ENCODE measurements at regions of chr2 and their contacts with region 1.

Region 1: DNA sequence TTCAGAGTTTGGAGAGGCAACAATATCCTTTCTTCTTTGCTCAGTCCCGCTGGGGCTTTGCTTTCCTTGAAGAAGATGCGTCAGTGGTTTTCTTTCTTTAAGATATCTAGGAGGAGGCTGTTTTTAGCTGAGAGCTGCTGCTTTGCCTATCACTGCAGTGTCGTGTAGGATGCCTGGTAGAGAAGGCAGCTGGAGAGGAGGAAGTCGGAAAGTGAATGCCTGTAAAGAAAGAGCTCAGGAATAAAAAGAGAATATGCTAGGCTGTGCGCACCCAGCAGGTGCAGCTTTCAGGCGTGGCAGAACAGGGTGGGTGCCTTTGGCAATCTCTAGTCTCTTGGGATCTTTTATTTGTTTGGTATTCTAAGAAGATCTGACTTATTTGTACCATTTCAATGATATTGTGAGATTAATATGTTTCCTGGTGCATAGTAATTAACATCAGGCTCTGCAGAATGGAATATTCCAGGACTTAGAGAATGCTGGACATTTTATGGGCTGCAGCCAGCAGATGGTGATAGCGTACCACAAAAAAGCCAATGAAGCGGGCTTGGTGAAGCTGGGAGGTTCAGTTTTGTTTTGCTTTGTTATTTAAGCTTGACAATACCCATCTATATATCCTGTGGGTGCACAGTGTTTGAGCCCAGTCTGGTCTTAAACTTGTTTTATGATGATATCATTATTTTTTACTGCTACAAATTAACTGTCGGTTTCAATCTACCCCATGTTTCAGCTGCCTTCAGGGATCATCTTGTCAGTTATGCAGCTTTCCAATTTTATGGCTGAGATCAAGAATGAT is 34.9 kb downstream of the CAVIN2 start:
- DNase-seq: peak; percentile 9
- H3K4me3 ChIP-seq: no peak overlapping the region
- H3K27me3 ChIP-seq: no peaks in the 10 kb centered on the region
- CTCF ChIP-seq: peak; percentile 82

Region 2: DNA sequence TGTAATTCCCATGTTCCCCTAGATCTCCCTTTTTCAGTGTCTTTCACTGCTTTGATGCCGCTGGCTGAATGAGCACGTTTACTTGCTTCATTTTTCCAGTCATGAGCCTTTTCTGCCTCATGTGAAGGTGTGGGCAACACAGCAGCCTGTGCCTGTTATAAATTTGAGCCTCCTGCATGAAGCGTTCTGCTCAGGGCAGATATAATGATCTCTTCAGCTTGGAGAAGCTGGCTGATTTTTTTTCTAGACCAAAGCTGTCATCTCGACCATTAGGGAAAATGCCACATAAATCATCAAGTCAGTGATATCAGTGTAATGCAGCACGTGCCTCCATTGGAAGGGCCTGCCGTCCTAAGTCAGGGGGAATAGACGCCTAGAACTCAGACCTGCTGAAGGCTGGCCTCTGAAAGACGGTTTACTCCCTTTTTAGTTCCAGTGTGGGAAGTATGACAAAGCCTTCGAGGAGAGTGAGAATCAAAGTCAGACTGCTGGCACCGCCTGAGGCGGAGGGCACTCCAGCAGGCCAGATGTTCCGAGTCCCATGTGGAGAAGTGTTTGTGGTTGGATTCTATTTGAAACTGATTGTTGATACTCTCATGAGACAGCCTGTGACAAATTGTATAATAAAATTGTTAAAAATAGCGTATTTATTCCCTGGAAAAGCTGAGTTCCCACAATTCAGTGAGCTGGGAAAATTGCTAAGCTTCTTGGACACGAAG is 370.4 kb before region 1 on chr2:
- CTCF ChIA-PET with region 1: no interaction called
- POLR2A ChIA-PET with region 1: no interaction called
- DNase-seq: peak; percentile 93
- H3K4me3 ChIP-seq: no peak overlapping the region
- H3K27me3 ChIP-seq: 0 out of 2 replicates have a peak, but pooled peaks cover 2% of the 10 kb centered on the region
- CTCF ChIP-seq: no peak

Region 3: GRCh38 chr2:191555092-191555742 is 256.8 kb before region 1 on chr2:
- CTCF ChIA-PET with region 1: interaction called, 12 read pairs
- POLR2A ChIA-PET with region 1: no interaction called
- DNase-seq: no peak
- H3K4me3 ChIP-seq: no peak overlapping the region
- H3K27me3 ChIP-seq: no peaks in the 10 kb centered on the region; the same call in 1 of the 2 replicates
- CTCF ChIP-seq: peak; percentile 71

Region 4: DNA sequence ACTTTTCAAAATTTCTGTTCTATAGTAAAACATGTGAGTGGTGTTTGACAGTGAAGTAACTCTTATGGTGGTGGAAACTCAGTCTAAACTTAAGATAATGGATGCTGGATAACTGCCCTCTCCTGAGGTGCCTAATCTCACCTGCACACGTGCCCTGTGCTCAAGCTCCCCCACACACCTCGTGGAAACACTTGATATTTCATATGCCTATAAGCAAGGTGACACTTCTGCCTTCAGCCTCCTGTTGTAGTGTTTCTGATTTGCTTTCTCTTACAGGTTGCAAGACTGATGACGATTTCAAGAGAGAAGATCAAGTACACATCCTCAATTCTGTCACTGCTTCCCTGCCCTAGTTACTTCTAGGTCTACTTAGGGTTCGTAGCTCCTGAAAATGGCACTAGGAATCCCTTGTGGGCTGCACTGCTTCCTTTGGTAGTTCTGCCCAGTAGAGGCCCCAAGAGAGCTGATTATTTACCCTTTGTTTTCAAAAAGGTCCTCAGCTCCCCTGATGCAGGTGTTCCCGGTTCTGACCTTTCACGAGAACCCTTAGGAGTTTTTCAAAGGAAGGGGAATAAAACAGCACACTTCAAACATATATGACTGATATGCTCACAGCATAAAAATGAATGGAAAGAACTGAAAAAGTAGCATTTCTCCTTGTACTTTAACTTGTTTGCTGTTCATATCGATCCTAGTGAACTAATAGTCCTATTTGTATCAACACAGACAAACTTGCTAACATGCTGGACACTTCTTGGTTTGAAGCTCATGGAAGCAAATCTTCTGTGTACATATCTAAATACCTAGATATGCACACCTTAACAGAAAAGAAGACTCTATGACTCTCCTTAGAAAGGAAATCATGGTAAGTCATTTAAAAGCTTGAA is 28.2 kb after region 1 on chr2:
- CTCF ChIA-PET with region 1: interaction called, 15 read pairs
- POLR2A ChIA-PET with region 1: no interaction called
- DNase-seq: no peak
- H3K4me3 ChIP-seq: no peak overlapping the region
- H3K27me3 ChIP-seq: no peaks in the 10 kb centered on the region
- CTCF ChIP-seq: no peak

Region 5: DNA sequence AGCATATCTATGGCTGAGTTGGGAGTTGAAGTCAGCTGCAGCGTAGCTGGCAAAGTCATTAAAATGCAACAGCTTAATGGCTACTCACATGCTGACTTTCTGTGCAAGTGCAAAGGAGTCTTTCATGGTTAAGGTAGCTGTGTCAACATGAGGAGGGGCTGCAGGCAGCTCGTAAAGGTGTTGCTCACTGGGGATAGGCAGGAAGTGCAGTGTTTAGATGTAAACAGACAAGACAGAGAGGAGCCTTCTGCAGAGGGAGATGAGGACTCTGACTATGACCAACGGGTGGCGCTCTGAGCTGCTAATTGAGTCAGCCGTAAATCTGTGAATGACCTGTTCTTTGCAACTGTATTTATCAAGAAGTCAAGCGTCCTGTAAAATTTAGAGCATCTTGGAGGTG is 57.2 kb after region 1 on chr2:
- CTCF ChIA-PET with region 1: interaction called, 33 read pairs
- POLR2A ChIA-PET with region 1: no interaction called
- DNase-seq: no peak
- H3K4me3 ChIP-seq: no peak overlapping the region
- H3K27me3 ChIP-seq: no peaks in the 10 kb centered on the region
- CTCF ChIP-seq: peak; percentile 41; the same call in 1 of the 2 replicates

Region 6: DNA sequence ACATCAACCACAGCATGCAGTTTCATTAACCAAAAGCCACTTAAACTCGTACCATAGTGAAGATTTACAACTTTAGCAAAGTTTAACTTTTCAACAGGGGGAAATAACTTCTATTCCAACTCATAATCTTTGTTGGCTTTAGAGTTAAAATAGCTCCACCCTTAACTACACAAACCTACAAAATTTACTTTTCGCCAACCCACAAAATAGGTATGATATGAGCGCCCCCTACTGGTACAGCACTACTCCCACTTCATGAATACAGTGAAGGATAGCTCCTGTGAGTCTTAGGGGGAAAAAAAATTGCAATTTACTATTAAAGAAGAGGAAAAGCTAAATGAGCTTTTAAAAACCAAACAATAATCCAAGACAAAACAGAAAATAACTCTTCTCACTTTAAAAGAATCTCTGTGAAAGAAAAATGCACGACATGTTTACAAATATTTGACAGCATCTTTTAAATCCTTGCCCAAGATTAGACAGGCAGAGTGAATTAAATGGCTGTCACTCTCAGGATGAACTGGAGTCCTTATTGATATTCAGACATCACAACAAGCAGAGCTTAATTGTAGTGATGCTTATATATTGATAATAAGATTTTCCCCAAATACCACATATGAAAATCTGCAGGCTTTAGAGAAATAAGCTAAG is 350.5 kb after region 1 on chr2:
- CTCF ChIA-PET with region 1: interaction called, 232 read pairs
- POLR2A ChIA-PET with region 1: interaction called, 4 read pairs
- DNase-seq: peak; percentile 21
- H3K4me3 ChIP-seq: no peak overlapping the region
- H3K27me3 ChIP-seq: peaks cover 1% of the 10 kb centered on the region; the same call in 1 of the 2 replicates
- CTCF ChIP-seq: peak; percentile 86

Region 7: GRCh38 chr2:192194866-192195547 is 383.0 kb after region 1 on chr2 and contains the start of gene TMEFF2:
- CTCF ChIA-PET with region 1: interaction called, 16 read pairs
- POLR2A ChIA-PET with region 1: no interaction called
- DNase-seq: no peak
- H3K4me3 ChIP-seq: peak within 1 kb of the TSS; percentile 40
- H3K27me3 ChIP-seq: peaks cover 37% of the 10 kb centered on the region
- CTCF ChIP-seq: peak; percentile 23; the same call in 1 of the 2 replicates
- polyA plus RNA-seq, gene TMEFF2: 0.25 and 0.33 TPM in 2 replicates

Region 8: DNA sequence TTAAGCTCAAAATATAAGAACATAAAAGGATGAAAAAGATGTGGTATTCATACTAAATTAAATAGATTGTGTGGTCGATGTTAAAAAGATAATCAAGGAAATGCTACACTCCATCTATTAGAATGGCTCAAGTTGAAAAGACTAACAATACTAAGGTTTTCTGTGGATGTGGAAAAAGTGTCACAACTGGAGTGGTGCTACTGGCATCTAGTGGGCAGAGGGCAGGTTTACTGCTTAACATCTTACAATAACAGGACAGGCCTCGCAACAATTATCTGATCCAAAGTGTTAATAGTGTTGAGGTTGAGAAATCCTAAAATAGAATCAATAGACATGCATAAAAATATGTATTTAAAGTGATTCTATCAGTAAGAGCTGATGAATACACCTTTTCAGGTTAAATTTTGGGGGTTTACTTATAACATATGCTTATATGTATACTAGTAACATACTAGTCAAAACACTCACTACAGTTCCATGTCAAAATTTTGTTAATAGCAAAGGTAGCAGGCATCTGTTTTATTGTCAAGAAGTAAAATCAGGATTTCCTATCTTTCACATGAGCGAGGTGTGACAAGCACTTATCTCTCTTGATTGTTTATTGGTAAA is 474.2 kb after region 1 on chr2:
- CTCF ChIA-PET with region 1: interaction called, 11 read pairs
- POLR2A ChIA-PET with region 1: no interaction called
- DNase-seq: no peak
- H3K4me3 ChIP-seq: no peak overlapping the region
- H3K27me3 ChIP-seq: no peaks in the 10 kb centered on the region
- CTCF ChIP-seq: peak; percentile 57